GM18951 (cell line): ENCODE measurements at regions of chr6 and their contacts with region 1.

Region 1: GRCh38 chr6:139374357-139375231 is at the start of gene CITED2:
- POLR2A ChIP-seq: peak; percentile 100

Region 2: DNA sequence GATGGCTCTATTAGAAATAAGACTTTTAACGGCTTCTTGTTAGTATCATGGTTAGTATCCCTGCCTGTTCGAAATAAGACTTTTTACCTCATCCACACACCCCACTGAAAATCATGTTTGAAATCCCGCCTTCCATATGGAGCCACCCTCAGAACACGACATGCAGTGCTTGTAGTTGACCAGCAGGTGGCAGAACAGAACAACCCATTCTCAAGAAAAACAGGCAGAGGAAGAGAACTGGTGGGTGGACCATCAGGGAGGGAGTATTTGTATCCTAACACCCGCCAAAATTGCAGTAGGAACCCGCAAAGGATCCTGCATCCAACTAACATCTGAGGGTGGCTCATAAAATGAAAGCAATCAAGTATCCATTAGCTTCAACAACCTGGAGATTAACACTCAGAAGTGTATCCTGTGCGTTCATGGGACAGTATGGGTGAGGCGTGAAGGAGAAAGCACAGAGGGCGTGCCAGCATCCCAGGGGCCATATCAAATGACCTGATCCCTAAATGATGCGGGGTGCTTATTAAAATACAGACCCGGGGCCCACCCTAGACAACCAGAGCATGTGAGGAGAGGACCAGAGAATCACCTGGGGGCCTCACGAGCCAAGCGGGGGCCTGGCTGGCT is 785.7 kb before region 1 on chr6:
- in situ Hi-C with region 1: loop called (anchors 25 kb)
- POLR2A ChIP-seq: no peak

Region 3: DNA sequence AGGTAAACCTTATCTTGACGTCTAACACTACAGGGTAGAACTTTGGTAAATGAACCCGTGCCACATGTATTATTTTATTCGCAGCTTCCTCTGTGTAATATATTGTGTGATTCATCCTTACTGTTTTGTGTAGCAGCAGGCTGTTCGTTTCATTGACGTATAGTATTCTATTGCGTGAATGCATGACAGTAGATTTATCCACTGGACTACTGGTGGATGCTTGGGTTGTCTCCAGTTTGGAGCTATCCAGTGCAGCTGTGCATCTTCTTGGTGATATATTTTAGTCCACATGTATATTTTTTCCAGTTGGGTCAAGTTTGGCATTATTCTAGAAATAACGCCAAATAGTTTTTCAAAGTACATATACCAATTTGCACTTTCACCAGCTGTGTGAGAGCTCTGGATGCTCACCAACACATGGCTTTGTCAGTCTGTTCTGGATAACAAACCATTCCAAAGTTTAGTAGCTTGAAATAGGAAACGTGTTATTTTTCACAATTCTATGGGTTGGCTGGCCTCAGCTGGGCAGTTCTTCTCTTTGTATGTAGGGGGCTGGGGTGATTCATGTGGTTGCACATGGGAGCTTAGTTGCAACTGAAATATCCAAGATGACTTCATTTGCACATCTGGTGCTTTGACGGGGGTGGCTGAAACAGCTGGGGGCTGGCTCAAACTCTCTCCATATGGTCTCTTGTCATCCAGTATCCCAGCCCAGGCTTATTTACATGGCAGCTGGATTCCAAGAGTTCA is 569.4 kb before region 1 on chr6:
- in situ Hi-C with region 1: loop called (anchors 5 kb)
- POLR2A ChIP-seq: no peak

Region 4: GRCh38 chr6:139153855-139154254 is 220.7 kb before region 1 on chr6:
- in situ Hi-C with region 1: no loop called
- POLR2A ChIP-seq: no peak